A549 (cell line): ENCODE measurements at regions of chr17 and their contacts with region 1.

Region 1: GRCh38 chr17:55527540-55528118 is 16.4 kb upstream of the SMIM36 start:
- DNase-seq: peak; percentile 50 to 71
- ATAC-seq: peak; percentile 84 to 86
- H3K4me3 ChIP-seq: no peak overlapping the region
- H3K27ac ChIP-seq: no peak overlapping the region; a peak in 1 of 6 replicates
- H3K4me1 ChIP-seq: no peaks in the 10 kb centered on the region
- CTCF ChIP-seq: peak; percentile 96
- EP300 ChIP-seq: no peak
- POLR2A ChIP-seq: no peak
- RAD21 ChIP-seq: peak; percentile 94 to 99

Region 2: GRCh38 chr17:55072898-55073297 is 454.7 kb before region 1 on chr17:
- CTCF ChIA-PET with region 1: no interaction called
- POLR2A ChIA-PET with region 1: no interaction called
- DNase-seq: no peak
- ATAC-seq: no peak
- H3K4me3 ChIP-seq: no peak overlapping the region
- H3K27ac ChIP-seq: no peak overlapping the region
- H3K4me1 ChIP-seq: no peaks in the 10 kb centered on the region
- CTCF ChIP-seq: no peak
- EP300 ChIP-seq: no peak
- POLR2A ChIP-seq: no peak
- RAD21 ChIP-seq: no peak

Region 3: GRCh38 chr17:55394357-55395021 is 133.1 kb before region 1 on chr17:
- CTCF ChIA-PET with region 1: no interaction called
- POLR2A ChIA-PET with region 1: no interaction called
- DNase-seq: no peak
- ATAC-seq: peak in 1 of 2 experiments; percentile 37; a peak in 3 of 6 replicates
- H3K4me3 ChIP-seq: no peak overlapping the region
- H3K27ac ChIP-seq: peak overlapping the region in 1 of 2 experiments; percentile 2; a peak in 2 of 6 replicates
- H3K4me1 ChIP-seq: peaks cover 11% of the 10 kb centered on the region; the same call in 2 of the 3 replicates
- CTCF ChIP-seq: no peak
- EP300 ChIP-seq: no peak
- POLR2A ChIP-seq: no peak
- RAD21 ChIP-seq: no peak

Region 4: GRCh38 chr17:55513885-55514591 is 13.6 kb before region 1 on chr17:
- CTCF ChIA-PET with region 1: interaction called, 41 read pairs
- POLR2A ChIA-PET with region 1: no interaction called
- DNase-seq: peak; percentile 61 to 79
- ATAC-seq: peak; percentile 55 to 88
- H3K4me3 ChIP-seq: no peak overlapping the region
- H3K27ac ChIP-seq: peak overlapping the region; percentile 69 to 74
- H3K4me1 ChIP-seq: peaks cover 9% of the 10 kb centered on the region
- CTCF ChIP-seq: peak; percentile 98
- EP300 ChIP-seq: no peak
- POLR2A ChIP-seq: no peak
- RAD21 ChIP-seq: peak; percentile 98 to 99

Region 5: DNA sequence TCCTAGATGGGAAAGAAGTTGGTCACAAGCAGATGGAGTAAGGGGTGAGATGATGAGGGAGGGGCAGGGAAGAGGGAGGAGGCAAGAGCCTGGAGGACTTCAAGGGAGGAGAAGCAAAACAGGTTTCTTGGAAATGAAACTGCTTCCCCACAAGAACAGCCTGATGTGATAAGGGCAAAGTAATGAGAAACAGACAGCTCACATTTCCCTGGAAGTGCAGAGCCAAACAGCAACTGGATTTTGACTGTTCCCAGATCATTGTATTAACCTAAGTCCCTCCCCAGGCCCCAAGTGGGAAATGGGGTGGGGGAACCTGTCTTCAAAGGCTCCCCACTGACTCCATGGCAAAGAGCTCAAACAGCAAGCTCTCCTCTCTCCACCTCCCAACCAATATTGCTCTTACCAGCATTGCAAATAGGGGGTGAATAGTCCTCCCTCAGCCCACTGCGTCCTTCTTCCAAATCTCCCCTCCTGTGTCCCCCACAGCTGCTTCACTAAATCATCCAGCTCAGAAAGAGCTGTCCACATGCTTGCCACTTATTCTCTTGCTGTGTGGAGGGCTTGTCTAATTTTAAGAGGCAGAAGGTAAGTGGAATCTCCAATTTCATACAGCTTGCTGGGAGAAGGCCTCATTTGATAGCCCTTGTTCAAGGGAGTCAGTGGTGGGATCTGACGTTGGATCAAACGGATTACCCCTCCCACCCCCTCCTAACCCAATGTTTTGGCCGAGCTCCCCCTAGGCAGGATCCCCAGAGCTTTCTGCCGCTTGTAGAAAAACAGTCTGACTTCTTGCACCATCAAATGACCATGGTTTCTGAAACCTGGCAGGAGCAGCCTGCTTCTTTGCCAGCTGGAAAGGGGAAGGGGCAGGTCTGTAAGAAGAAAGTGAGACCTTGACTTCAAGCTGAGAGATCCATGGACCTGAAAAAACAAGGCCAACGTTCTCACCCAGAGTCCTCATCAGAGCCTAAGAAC is 39.9 kb after region 1 on chr17:
- CTCF ChIA-PET with region 1: interaction called, 22 read pairs
- POLR2A ChIA-PET with region 1: no interaction called
- DNase-seq: no peak
- ATAC-seq: no peak
- H3K4me3 ChIP-seq: no peak overlapping the region
- H3K27ac ChIP-seq: no peak overlapping the region
- H3K4me1 ChIP-seq: peaks cover 13% of the 10 kb centered on the region
- CTCF ChIP-seq: no peak
- EP300 ChIP-seq: no peak
- POLR2A ChIP-seq: no peak
- RAD21 ChIP-seq: no peak

Region 6: GRCh38 chr17:55635253-55635914 is 107.8 kb after region 1 on chr17:
- CTCF ChIA-PET with region 1: interaction called, 48 read pairs
- POLR2A ChIA-PET with region 1: no interaction called
- DNase-seq: no peak
- ATAC-seq: no peak
- H3K4me3 ChIP-seq: no peak overlapping the region
- H3K27ac ChIP-seq: no peak overlapping the region
- H3K4me1 ChIP-seq: no peaks in the 10 kb centered on the region
- CTCF ChIP-seq: no peak
- EP300 ChIP-seq: no peak
- POLR2A ChIP-seq: no peak
- RAD21 ChIP-seq: no peak

Region 7: GRCh38 chr17:55750750-55751657 is 223.4 kb after region 1 on chr17 and contains the start of gene PCTP:
- CTCF ChIA-PET with region 1: interaction called, 12 read pairs
- POLR2A ChIA-PET with region 1: no interaction called
- DNase-seq: peak; percentile 91 to 94
- ATAC-seq: peak; percentile 97 to 99
- H3K4me3 ChIP-seq: peak within 1 kb of the TSS; percentile 58
- H3K27ac ChIP-seq: peak within 1 kb of the TSS; percentile 86 to 94
- H3K4me1 ChIP-seq: peaks cover 12% of the 10 kb centered on the region; the same call in 2 of the 3 replicates
- CTCF ChIP-seq: 0 out of 3 replicates have a peak, but pooled peaks have one; percentile 5
- EP300 ChIP-seq: no peak
- POLR2A ChIP-seq: peak; percentile 87
- RAD21 ChIP-seq: no peak; a peak in 1 of 5 replicates
- polyA plus RNA-seq, gene PCTP: 28.0 and 31.5 TPM in 2 replicates

Region 8: DNA sequence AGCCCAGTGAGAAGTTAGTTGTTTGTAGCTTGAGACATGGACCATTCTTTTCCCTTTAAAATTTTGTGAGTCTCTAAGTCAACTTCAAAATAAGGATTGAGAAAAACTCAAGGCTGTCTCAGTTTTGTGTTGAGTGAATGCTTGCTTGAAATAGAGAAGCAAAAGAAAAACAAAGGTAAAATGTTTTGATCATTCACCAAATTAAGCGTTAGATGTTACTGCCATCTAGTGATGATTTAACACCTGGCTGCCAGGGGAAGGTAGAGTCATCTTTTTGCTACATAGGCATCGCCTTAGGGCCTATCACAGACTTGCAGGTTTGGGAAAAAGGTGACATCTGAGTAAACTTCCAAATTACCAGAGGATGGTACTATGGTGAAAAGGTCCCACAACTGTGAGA is 297.6 kb after region 1 on chr17:
- CTCF ChIA-PET with region 1: interaction called, 32 read pairs
- POLR2A ChIA-PET with region 1: no interaction called
- DNase-seq: peak; percentile 10 to 13
- ATAC-seq: peak; percentile 43 to 65; a peak in 3 of 6 replicates
- H3K4me3 ChIP-seq: no peak overlapping the region
- H3K27ac ChIP-seq: no peak overlapping the region
- H3K4me1 ChIP-seq: no peaks in the 10 kb centered on the region
- CTCF ChIP-seq: peak; percentile 42
- EP300 ChIP-seq: no peak
- POLR2A ChIP-seq: no peak
- RAD21 ChIP-seq: peak; percentile 47 to 58; a peak in 4 of 5 replicates